ENCODE measurements at regions of chr3 and their contacts with region 1.

Region 1: DNA sequence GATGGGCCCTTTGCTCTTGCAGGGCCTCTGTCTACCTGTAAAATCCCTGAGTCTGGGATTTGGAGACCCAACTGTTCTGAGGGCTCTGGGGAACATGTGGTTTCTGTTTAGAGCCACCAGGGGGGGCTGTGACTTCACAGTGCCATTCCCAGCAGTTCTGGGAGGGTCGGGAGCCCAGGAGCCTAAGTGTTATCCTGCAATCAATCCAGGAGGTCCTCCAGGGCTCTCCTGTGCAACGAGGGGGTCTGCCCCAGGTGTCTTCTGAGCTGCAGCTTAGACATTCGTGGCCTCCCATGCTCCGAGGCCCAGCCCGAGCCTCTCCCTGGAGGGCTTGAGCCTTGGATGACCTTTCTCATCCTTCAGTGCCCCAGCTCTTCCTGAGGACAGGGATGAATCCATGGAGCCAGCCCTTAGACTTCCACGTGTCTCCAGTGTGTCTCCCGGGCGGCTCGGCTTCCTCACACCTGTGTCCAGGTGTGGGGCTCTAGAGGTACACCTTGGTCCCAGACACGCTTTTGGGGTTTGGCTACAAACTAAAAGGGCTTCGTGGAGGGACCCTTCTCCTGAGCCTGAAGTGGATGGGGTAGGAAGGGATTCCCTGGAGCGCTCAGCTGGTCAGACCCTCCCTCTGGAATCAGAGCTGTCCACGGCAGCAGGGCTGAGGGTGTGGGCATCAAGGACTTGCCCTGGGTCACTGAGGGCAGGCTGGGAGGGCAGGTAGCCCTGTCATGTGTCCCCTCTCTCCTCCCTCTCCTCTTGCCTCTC is 20.3 kb upstream of the ABTB1 start:
- DNase-seq: no peak
- H3K4me3 ChIP-seq: no peak overlapping the region
- H3K27me3 ChIP-seq: peaks cover 1% of the 10 kb centered on the region; the same call in 1 of the 2 replicates
- CTCF ChIP-seq: peak; percentile 90

Region 2: DNA sequence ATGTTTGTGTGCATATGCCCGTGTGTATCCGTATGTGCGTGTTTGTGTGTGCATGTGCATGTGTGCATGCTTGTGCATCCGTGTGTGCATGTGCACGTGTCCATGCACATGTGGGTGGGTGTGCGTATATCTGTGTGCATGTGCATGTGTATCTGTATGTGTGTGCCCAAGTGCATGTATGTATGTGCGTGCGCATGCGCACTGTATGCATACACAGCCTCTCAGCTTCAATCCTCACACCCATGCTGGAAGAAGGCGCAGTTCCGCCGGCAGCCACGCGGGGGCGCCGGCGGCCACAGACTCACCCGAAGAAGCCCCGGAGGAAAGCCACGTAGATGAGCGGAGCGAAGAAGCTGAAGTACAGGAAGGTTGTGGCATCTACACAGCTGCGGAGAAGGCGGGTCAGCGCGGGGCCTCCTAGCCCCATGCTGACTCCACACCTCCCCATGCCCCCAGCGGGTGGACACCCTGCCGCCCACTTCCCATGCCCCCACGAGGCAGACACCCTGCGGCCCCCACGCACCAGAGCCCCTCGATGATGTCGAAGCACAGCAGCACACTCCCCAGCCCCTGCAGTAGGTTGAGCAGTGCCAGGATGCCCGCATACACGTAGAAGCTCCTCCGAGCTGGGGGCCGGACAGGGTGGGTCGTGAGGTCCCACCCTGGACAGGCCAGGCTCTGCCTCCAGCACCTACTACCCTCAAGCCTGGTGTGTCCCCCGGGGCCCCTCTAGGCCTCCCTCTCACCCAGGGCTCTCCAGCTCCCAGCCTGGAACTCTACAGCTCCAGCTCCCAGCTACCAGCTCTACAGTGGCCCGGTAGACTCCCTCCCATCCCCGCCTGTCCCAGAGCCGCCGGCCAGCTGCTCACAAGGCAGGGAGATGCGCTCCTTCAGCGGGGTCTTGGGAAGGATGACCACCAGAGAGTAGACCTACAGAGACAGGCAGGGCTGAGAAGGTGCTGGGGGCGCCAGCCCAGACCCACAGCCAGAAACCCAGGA is 77.2 kb before region 1 on chr3:
- CTCF ChIA-PET with region 1: interaction called, 10 read pairs
- POLR2A ChIA-PET with region 1: no interaction called
- DNase-seq: peak; percentile 66
- H3K4me3 ChIP-seq: no peak overlapping the region
- H3K27me3 ChIP-seq: no peaks in the 10 kb centered on the region
- CTCF ChIP-seq: peak; percentile 100

Region 3: GRCh38 chr3:127637546-127637945 is 14.9 kb before region 1 on chr3:
- CTCF ChIA-PET with region 1: interaction called, 16 read pairs
- POLR2A ChIA-PET with region 1: no interaction called
- DNase-seq: no peak
- H3K4me3 ChIP-seq: no peak overlapping the region
- H3K27me3 ChIP-seq: peaks cover 6% of the 10 kb centered on the region
- CTCF ChIP-seq: no peak

Region 4: DNA sequence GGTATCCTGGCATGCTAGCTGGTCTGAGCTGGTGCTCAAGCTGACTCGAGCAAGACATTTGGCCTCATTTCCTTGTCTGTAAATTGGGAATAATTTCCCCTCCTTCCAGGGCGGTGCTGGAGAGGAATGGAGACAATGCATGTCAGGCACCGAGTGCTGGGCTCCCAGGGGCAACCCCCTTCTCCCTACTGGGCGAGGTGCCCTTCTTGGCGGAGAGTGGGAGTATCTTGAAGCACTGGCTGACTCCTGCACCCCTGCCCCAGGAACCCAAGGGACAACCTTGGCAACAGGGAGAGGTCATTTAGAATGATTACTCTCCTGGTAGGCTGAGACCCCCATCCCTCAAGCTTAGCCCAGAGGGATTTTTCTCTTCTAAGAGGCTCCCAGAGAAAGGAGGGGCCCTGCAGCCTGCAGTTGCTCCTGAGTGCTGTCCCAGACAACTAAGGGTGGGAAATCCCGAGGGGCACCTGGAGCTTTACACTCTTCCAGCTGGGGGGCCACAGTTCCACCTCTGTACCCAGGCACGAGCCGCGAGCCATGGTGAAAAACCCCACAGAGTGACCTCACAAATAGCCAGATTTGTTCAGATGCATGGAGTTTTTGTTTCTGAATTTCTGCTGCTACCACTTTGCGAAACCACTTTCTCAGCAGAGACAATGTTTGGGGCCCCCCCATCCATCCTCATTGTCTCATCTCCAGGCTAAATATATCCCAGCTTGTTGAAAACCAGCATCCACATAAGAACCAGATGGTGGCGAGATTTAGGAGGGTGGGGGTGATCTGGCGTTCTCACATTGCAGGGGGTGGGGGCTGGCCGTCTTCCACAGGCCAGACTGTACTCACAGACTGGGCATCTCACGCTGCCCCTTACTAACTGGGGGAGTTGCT is 65.2 kb after region 1 on chr3:
- CTCF ChIA-PET with region 1: no interaction called
- POLR2A ChIA-PET with region 1: no interaction called
- DNase-seq: no peak
- H3K4me3 ChIP-seq: no peak overlapping the region
- H3K27me3 ChIP-seq: no peaks in the 10 kb centered on the region; the same call in 1 of the 2 replicates
- CTCF ChIP-seq: no peak

Region 5: DNA sequence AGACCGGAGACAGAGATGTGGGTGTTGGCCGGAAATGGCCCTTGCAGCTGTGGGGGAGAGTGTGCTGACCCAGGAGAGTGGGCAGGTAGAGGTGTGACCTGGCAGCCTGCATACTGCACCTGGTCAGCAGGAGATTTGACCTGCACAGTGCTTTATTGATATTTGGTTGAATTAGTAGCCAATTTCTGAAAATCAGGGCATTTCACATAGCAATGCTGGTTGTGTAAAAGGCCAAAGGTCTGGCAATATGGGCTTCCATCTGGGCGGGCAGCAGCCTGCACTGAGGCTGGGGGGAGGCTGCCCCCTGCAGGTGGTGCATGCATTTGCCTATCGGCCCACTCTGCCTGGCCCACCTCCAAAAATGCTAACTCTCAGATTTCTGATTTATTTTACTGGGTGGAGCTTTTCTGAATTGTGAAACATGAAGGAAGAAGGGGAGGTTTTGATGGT is 179.3 kb after region 1 on chr3:
- CTCF ChIA-PET with region 1: interaction called, 17 read pairs
- POLR2A ChIA-PET with region 1: no interaction called
- DNase-seq: no peak
- H3K4me3 ChIP-seq: no peak overlapping the region
- H3K27me3 ChIP-seq: no peaks in the 10 kb centered on the region
- CTCF ChIP-seq: peak; percentile 72

Region 6: GRCh38 chr3:127970966-127971592 is 318.7 kb after region 1 on chr3:
- CTCF ChIA-PET with region 1: interaction called, 50 read pairs
- POLR2A ChIA-PET with region 1: no interaction called
- DNase-seq: no peak
- H3K4me3 ChIP-seq: no peak overlapping the region
- H3K27me3 ChIP-seq: peaks cover 9% of the 10 kb centered on the region
- CTCF ChIP-seq: peak; percentile 79